Naive thymus-derived CD4-positive, alpha-beta T cell (primary cell): ENCODE measurements at regions of chr12 and their contacts with region 1.

Region 1: DNA sequence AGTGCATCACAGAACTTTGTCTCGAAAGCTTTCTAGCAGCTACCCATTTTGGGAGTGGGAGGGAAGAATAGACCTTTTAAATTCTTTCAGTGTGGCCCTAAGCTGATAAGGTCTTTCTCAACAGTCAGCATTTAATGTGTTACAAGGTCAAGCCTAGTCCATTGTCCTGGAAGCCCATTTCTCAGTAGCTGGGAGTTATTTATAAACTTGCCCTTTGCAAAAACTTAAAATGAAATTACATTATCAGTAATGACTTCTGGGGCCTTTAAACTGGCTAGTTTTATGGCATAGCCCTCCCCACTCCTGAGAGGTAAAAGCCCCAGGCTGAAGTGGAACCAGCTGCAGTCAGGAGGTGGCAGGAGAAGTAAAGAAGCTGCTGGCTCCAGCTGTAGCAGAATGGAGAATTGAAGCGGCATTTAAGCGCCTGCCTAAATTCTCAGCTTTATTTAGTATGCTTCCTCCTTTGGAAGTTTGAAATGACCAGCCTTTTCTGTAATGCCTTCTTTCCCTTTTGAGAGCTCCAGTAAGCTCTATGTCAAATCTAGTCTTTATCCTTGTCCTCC is 12.4 kb downstream of the COPZ1 start:
- DNase-seq: no peak
- ATAC-seq: no peak
- H3K4me3 ChIP-seq: no peak overlapping the region
- H3K4me3 Mint-ChIP-seq: no peak overlapping the region
- H3K27ac ChIP-seq: no peak overlapping the region
- H3K27ac Mint-ChIP-seq: peak overlapping the region in 2 of 9 donors; percentile 19 to 25
- H3K4me1 ChIP-seq: peaks cover 4 to 13% of the 10 kb centered on the region in 2 donors
- H3K4me1 Mint-ChIP-seq: peaks cover 7 to 66% (median 32%) of the 10 kb centered on the region in 7 donors
- H3K27me3 ChIP-seq: no peaks in the 10 kb centered on the region
- H3K27me3 Mint-ChIP-seq: no peaks in the 10 kb centered on the region

Region 2: DNA sequence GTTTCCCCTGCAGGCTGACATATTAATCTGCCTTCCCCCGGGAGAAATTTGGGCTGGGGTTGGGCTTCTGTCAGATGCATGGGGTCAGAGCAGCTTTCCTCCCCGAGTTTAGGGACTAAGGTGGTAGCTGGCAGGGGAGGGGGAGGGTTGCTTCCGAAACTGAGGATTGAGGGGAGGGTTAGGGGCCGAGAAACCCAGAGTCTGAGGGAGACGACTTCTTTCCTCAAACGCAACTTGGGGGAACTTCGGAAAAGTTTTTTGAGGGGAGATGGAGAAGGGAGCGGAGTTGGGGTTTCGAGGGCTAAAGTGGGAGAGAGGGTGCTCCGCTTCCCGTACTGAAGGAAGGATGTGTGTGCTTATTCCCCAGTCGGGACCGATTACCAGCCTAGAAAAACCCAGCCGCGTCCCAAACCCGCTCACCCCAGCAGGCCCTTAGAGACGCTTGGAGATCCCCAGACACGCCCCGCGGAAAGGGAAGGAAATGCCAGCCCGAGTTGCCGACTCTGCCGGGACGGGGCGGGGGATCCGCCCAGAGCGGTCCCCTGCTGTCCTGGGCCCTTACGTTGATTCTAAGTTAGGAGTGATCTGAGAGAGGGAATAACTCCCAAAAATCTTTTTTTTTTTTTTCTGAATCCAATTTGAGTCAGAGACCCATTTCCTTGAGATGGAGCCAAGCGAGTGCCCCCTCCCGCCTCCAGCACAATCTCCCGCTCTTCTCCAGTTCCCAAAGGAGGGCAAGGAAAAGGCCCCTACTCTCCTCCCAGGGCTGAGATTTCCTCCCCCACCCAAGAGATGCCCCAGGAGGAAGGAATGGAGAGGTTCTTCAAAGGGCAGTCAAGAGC is 210.4 kb before region 1 on chr12:
- CTCF ChIA-PET with region 1: no interaction called
- POLR2A ChIA-PET with region 1: no interaction called
- intact Hi-C with region 1: no loop called
- DNase-seq: no peak
- ATAC-seq: peak; percentile 66
- H3K4me3 ChIP-seq: peak overlapping the region; percentile 25
- H3K4me3 Mint-ChIP-seq: peak overlapping the region in 9 of 10 donors; percentile 48 to 74 (median 67)
- H3K27ac ChIP-seq: no peak overlapping the region
- H3K27ac Mint-ChIP-seq: no peak overlapping the region
- H3K4me1 ChIP-seq: peaks cover 10 to 18% of the 10 kb centered on the region in 2 donors
- H3K4me1 Mint-ChIP-seq: peaks cover 7 to 25% (median 18%) of the 10 kb centered on the region in 7 donors
- H3K27me3 ChIP-seq: peaks cover 17 to 31% of the 10 kb centered on the region in 2 donors
- H3K27me3 Mint-ChIP-seq: peaks cover 63 to 85% (median 75%) of the 10 kb centered on the region in 5 donors

Region 3: GRCh38 chr12:54352022-54352531 is 14.7 kb after region 1 on chr12:
- CTCF ChIA-PET with region 1: interaction called, 6 read pairs
- POLR2A ChIA-PET with region 1: interaction called, 9 read pairs
- intact Hi-C with region 1: loop called in 1 of 2 experiments (anchors 2 kb)
- DNase-seq: peak in 8 of 9 donors; percentile 11 to 62 (median 35)
- ATAC-seq: peak; percentile 65
- H3K4me3 ChIP-seq: peak overlapping the region; percentile 43
- H3K4me3 Mint-ChIP-seq: peak overlapping the region; percentile 70 to 93 (median 85)
- H3K27ac ChIP-seq: peak overlapping the region; percentile 63
- H3K27ac Mint-ChIP-seq: peak overlapping the region; percentile 58 to 93 (median 85)
- H3K4me1 ChIP-seq: peaks cover 0 to 9% of the 10 kb centered on the region in 2 donors
- H3K4me1 Mint-ChIP-seq: peaks cover 11 to 30% (median 18%) of the 10 kb centered on the region in 7 donors
- H3K27me3 ChIP-seq: no peaks in the 10 kb centered on the region
- H3K27me3 Mint-ChIP-seq: no peaks in the 10 kb centered on the region

Region 4: DNA sequence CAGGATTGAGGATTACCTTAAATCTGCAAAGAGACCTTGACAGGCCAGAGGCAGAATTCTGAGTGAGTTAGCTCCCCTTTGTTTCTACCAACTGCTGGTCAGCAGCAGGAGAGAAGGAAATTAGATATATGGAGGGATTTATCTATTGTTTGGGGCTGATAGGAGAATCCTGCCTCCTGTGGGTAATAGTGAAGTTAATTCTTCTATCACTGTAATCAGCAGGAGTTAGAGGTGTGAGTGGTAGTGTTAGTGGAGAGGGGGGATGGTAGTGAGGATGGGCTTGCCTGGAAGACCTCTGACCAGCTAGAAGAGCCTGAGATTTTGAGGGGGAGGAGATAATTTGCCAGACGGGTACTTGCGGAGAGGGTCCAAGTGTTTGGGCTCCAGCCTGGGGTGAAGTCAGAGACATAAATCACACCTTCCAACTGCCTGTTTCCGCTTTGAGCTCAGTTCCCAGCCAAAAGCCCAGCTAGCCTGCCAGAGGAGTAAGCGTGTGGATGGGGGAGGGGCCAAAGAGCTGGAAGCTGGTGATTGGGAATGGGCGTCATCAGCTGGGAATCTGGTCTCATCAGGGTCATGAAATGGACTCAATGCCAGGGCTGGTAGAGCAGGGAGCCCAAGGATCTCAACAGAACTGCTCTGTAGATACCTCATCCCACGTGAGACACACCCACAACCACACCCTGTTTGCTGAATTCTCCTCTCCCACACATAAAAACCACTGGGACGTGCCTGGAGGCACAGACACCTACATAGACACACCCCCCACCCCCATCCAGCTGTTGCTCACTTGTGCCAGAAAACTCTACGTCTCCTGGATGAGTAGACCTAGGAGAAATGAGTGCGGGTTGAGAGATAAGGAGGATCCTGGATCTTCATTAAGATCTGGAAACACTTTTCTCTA is 94.8 kb after region 1 on chr12:
- CTCF ChIA-PET with region 1: no interaction called
- POLR2A ChIA-PET with region 1: no interaction called
- intact Hi-C with region 1: no loop called
- DNase-seq: peak in 1 of 9 donors; percentile 49
- ATAC-seq: no peak
- H3K4me3 ChIP-seq: no peak overlapping the region
- H3K4me3 Mint-ChIP-seq: peak overlapping the region in 2 of 10 donors; percentile 5 to 80
- H3K27ac ChIP-seq: no peak overlapping the region
- H3K27ac Mint-ChIP-seq: peak overlapping the region in 5 of 9 donors; percentile 7 to 87 (median 49)
- H3K4me1 ChIP-seq: peaks cover 13 to 23% of the 10 kb centered on the region in 2 donors
- H3K4me1 Mint-ChIP-seq: peaks cover 20 to 56% (median 38%) of the 10 kb centered on the region in 7 donors
- H3K27me3 ChIP-seq: no peaks in the 10 kb centered on the region
- H3K27me3 Mint-ChIP-seq: peaks cover 0 to 13% (median 0%) of the 10 kb centered on the region in 5 donors